ENCODE measurements at regions of chr16 and their contacts with region 1.

Region 1: DNA sequence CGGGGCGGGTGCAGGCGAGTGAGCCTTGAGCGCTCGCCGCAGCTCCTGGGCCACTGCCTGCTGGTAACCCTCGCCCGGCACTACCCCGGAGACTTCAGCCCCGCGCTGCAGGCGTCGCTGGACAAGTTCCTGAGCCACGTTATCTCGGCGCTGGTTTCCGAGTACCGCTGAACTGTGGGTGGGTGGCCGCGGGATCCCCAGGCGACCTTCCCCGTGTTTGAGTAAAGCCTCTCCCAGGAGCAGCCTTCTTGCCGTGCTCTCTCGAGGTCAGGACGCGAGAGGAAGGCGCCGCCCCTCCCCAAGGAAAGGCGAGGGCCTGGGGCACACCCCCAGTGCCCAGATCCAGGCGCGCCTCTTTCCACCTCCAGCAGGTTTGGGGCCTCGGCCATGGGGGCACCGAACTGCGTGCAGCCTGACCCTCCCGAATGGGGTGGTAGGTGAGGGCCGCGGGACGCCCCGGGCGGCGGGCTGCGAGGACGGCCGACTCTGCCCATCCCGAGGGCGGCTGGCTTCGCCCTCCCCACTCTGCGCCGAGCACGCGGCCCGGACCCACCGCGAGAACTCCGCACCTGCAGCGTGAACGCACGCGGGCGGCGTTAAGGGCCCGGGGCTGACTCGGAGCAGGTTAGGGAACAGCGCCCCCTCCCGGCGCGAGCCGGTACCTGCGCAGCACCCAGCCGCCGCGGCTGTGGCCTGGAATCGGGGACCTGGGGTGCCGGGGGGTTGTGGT is 844 bp downstream of the HBQ1 start:
- DNase-seq: peak; percentile 79
- H3K4me3 ChIP-seq: peak overlapping the region; percentile 20
- H3K27ac ChIP-seq: no peak overlapping the region
- H3K4me1 ChIP-seq: peaks cover 11% of the 10 kb centered on the region
- H3K27me3 ChIP-seq: peaks cover 45% of the 10 kb centered on the region
- CTCF ChIP-seq: peak; percentile 98

Region 2: GRCh38 chr16:45454-45853 is 135.6 kb before region 1 on chr16:
- intact Hi-C with region 1: no loop called
- DNase-seq: no peak
- H3K4me3 ChIP-seq: no peak overlapping the region
- H3K27ac ChIP-seq: no peak overlapping the region
- H3K4me1 ChIP-seq: no peaks in the 10 kb centered on the region
- H3K27me3 ChIP-seq: no peaks in the 10 kb centered on the region
- CTCF ChIP-seq: no peak

Region 3: DNA sequence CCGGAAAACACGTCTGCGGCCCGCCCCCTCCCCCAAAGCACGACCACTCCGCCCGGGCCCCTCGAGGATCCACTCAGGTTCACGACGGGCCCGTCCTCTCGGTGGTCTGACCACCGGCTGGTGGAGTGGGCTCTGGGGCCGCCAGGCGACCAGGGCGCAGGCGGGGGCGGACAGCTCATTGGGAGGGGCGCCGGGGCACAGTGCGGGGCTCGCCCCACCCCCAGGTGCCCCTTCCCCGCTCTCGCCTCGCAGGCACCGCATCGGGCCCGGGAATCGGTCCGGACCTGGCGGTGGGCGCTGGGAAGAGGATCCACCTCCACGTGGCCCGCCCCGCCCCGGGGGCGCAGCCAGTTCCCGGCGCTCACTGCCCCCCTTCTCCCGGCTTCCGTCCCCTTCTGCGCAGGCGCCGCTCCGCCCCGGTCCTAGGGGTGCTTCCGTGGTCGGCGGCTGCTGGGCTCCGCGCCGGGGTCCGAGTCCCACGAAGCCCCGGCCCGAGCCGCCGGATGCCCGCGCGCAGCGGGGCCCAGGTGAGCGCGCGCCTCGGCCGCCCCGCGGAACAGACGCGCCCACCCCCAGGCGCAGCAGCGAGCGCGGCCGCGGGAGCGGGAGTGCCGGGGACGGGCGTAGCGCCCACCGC is 103.2 kb before region 1 on chr16 and contains the start of gene MPG:
- intact Hi-C with region 1: no loop called
- DNase-seq: peak; percentile 90
- H3K4me3 ChIP-seq: peak within 1 kb of the TSS; percentile 95
- H3K27ac ChIP-seq: peak within 1 kb of the TSS; percentile 96
- H3K4me1 ChIP-seq: peaks cover 18% of the 10 kb centered on the region
- H3K27me3 ChIP-seq: no peaks in the 10 kb centered on the region
- CTCF ChIP-seq: no peak
- total RNA-seq, gene MPG: 39.3 to 42.1 TPM

Region 4: GRCh38 chr16:106623-107324 is 74.3 kb before region 1 on chr16:
- intact Hi-C with region 1: loop called (anchors 5 kb)
- DNase-seq: peak; percentile 58
- H3K4me3 ChIP-seq: no peak overlapping the region
- H3K27ac ChIP-seq: no peak overlapping the region
- H3K4me1 ChIP-seq: no peaks in the 10 kb centered on the region
- H3K27me3 ChIP-seq: no peaks in the 10 kb centered on the region
- CTCF ChIP-seq: peak; percentile 58

Region 5: DNA sequence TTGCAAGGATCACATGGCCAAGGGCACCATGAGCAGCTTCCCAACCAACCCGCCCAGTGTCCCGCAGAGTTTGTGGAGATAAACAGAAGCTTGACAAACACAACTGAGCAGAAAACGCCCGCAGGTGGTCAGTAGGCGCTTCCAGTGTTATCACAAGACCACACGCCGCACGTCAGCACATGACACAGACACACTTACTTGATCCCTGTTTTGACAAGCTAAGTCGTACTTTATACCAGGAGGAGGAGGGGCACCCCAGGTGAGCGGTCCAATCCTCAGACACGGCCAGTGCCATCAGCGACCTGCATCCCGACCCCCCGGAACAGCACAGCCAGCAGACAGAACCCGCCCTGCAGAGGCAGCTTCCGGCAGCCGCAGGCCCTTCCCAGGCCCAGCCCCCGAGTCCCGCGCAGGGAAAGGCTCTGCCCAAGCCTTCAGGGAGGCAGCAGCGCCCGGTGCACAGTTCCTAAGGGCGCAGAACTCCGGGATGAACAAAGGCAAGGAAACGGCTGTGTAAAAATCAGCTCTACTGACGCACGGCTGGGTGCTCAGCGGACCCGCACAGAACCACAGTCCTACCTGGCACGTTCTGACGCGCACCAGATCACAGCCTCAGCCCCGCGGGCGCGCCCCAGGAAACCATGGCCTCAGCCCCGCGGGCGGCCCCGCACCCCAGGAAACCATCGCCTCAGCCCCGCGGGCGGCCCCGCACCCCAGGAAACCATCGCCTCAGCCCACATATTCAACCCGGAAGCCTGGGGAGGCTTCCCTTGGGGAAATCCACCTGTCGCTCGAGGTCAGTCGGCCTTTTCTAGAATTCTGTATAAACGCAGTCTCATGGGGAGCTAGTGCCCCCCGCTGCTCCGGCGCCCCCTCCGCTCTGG is 143.6 kb after region 1 on chr16:
- intact Hi-C with region 1: no loop called
- DNase-seq: peak; percentile 40
- H3K4me3 ChIP-seq: peak overlapping the region; percentile 18
- H3K27ac ChIP-seq: peak overlapping the region; percentile 88
- H3K4me1 ChIP-seq: peaks cover 28% of the 10 kb centered on the region
- H3K27me3 ChIP-seq: no peaks in the 10 kb centered on the region
- CTCF ChIP-seq: no peak

Region 6: GRCh38 chr16:589658-590159 is 408.6 kb after region 1 on chr16 and contains the start of gene RAB40C:
- intact Hi-C with region 1: no loop called
- DNase-seq: peak; percentile 99
- H3K4me3 ChIP-seq: peak within 1 kb of the TSS; percentile 84
- H3K27ac ChIP-seq: peak within 1 kb of the TSS; percentile 97
- H3K4me1 ChIP-seq: peaks cover 25% of the 10 kb centered on the region
- H3K27me3 ChIP-seq: no peaks in the 10 kb centered on the region
- CTCF ChIP-seq: no peak
- total RNA-seq, gene RAB40C: 34.9 to 38.5 TPM

Measured in colonic mucosa (tissue), 4 donors.